ENCODE measurements at regions of chr13 and their contacts with region 1.

Region 1: GRCh38 chr13:101144808-101145419 is 271.4 kb downstream of the NALCN start:
- DNase-seq: peak in 7 of 9 donors; percentile 17 to 48 (median 33)
- ATAC-seq: peak; percentile 63
- H3K4me3 ChIP-seq: no peak overlapping the region
- H3K4me3 Mint-ChIP-seq: no peak overlapping the region
- H3K27ac ChIP-seq: no peak overlapping the region
- H3K27ac Mint-ChIP-seq: no peak overlapping the region
- H3K4me1 ChIP-seq: no peaks in the 10 kb centered on the region
- H3K4me1 Mint-ChIP-seq: no peaks in the 10 kb centered on the region
- H3K27me3 ChIP-seq: no peaks in the 10 kb centered on the region
- H3K27me3 Mint-ChIP-seq: peaks cover 7 to 48% (median 40%) of the 10 kb centered on the region in 5 donors

Region 2: DNA sequence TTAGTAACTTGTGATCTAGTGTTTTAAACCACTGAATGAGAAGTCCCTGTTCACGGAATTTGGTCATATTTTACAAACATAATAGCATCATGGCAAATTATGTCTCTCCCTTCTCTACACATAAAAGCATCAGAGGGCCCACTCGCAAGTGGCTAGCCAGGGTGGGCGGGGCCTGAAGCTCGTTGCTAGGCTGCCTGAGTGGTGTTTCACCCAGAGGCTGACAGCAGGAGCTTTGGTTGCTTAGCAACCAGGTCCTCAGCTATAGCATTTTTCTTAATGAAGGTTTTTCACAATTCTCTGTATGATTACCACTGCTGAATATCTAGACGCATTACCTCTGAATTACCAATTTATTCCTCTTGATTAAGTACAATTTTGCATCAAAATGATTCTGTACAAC is 144.8 kb after region 1 on chr13:
- CTCF ChIA-PET with region 1: no interaction called
- POLR2A ChIA-PET with region 1: no interaction called
- intact Hi-C with region 1: loop called in 1 of 2 experiments (anchors 10 kb)
- DNase-seq: no peak
- ATAC-seq: no peak
- H3K4me3 ChIP-seq: no peak overlapping the region
- H3K4me3 Mint-ChIP-seq: no peak overlapping the region
- H3K27ac ChIP-seq: no peak overlapping the region
- H3K27ac Mint-ChIP-seq: no peak overlapping the region
- H3K4me1 ChIP-seq: no peaks in the 10 kb centered on the region
- H3K4me1 Mint-ChIP-seq: no peaks in the 10 kb centered on the region
- H3K27me3 ChIP-seq: no peaks in the 10 kb centered on the region
- H3K27me3 Mint-ChIP-seq: peaks cover 0 to 24% (median 9%) of the 10 kb centered on the region in 5 donors

Region 3: GRCh38 chr13:101514788-101515187 is 369.9 kb after region 1 on chr13:
- CTCF ChIA-PET with region 1: no interaction called
- POLR2A ChIA-PET with region 1: no interaction called
- intact Hi-C with region 1: loop called (anchors 1 to 10 kb)
- DNase-seq: peak in 6 of 9 donors; percentile 2 to 32 (median 14)
- ATAC-seq: no peak
- H3K4me3 ChIP-seq: no peak overlapping the region
- H3K4me3 Mint-ChIP-seq: no peak overlapping the region
- H3K27ac ChIP-seq: no peak overlapping the region
- H3K27ac Mint-ChIP-seq: no peak overlapping the region
- H3K4me1 ChIP-seq: no peaks in the 10 kb centered on the region
- H3K4me1 Mint-ChIP-seq: peaks cover 0 to 5% (median 0%) of the 10 kb centered on the region in 7 donors
- H3K27me3 ChIP-seq: no peaks in the 10 kb centered on the region
- H3K27me3 Mint-ChIP-seq: peaks cover 0 to 19% (median 3%) of the 10 kb centered on the region in 5 donors

Region 4: GRCh38 chr13:101919541-101920181 is 774.7 kb after region 1 on chr13:
- CTCF ChIA-PET with region 1: no interaction called
- POLR2A ChIA-PET with region 1: no interaction called
- intact Hi-C with region 1: loop called in 1 of 2 experiments (anchors 5 kb)
- DNase-seq: no peak
- ATAC-seq: no peak
- H3K4me3 ChIP-seq: no peak overlapping the region
- H3K4me3 Mint-ChIP-seq: no peak overlapping the region
- H3K27ac ChIP-seq: no peak overlapping the region
- H3K27ac Mint-ChIP-seq: no peak overlapping the region
- H3K4me1 ChIP-seq: no peaks in the 10 kb centered on the region
- H3K4me1 Mint-ChIP-seq: peaks cover 0 to 2% (median 0%) of the 10 kb centered on the region in 7 donors
- H3K27me3 ChIP-seq: peaks cover 0 to 8% of the 10 kb centered on the region in 2 donors
- H3K27me3 Mint-ChIP-seq: peaks cover 44 to 65% (median 57%) of the 10 kb centered on the region in 5 donors

Region 5: GRCh38 chr13:102141625-102142472 is 996.9 kb after region 1 on chr13:
- CTCF ChIA-PET with region 1: no interaction called
- POLR2A ChIA-PET with region 1: no interaction called
- intact Hi-C with region 1: loop called in 1 of 2 experiments (anchors 10 kb)
- DNase-seq: no peak
- ATAC-seq: no peak
- H3K4me3 ChIP-seq: no peak overlapping the region
- H3K4me3 Mint-ChIP-seq: no peak overlapping the region
- H3K27ac ChIP-seq: no peak overlapping the region
- H3K27ac Mint-ChIP-seq: no peak overlapping the region
- H3K4me1 ChIP-seq: no peaks in the 10 kb centered on the region
- H3K4me1 Mint-ChIP-seq: peaks cover 0 to 1% (median 0%) of the 10 kb centered on the region in 7 donors
- H3K27me3 ChIP-seq: no peaks in the 10 kb centered on the region
- H3K27me3 Mint-ChIP-seq: peaks cover 0 to 12% (median 0%) of the 10 kb centered on the region in 5 donors

Region 6: GRCh38 chr13:102555917-102556553 is 1411.1 kb after region 1 on chr13:
- CTCF ChIA-PET with region 1: interaction called, 11 read pairs
- POLR2A ChIA-PET with region 1: no interaction called
- intact Hi-C with region 1: loop called in 1 of 2 experiments (anchors 1 kb)
- DNase-seq: peak in 5 of 9 donors; percentile 19 to 35 (median 28)
- ATAC-seq: no peak
- H3K4me3 ChIP-seq: no peak overlapping the region
- H3K4me3 Mint-ChIP-seq: no peak overlapping the region
- H3K27ac ChIP-seq: no peak overlapping the region
- H3K27ac Mint-ChIP-seq: no peak overlapping the region
- H3K4me1 ChIP-seq: no peaks in the 10 kb centered on the region
- H3K4me1 Mint-ChIP-seq: peaks cover 0 to 5% (median 0%) of the 10 kb centered on the region in 7 donors
- H3K27me3 ChIP-seq: no peaks in the 10 kb centered on the region
- H3K27me3 Mint-ChIP-seq: peaks cover 0 to 11% (median 7%) of the 10 kb centered on the region in 5 donors

Region 7: DNA sequence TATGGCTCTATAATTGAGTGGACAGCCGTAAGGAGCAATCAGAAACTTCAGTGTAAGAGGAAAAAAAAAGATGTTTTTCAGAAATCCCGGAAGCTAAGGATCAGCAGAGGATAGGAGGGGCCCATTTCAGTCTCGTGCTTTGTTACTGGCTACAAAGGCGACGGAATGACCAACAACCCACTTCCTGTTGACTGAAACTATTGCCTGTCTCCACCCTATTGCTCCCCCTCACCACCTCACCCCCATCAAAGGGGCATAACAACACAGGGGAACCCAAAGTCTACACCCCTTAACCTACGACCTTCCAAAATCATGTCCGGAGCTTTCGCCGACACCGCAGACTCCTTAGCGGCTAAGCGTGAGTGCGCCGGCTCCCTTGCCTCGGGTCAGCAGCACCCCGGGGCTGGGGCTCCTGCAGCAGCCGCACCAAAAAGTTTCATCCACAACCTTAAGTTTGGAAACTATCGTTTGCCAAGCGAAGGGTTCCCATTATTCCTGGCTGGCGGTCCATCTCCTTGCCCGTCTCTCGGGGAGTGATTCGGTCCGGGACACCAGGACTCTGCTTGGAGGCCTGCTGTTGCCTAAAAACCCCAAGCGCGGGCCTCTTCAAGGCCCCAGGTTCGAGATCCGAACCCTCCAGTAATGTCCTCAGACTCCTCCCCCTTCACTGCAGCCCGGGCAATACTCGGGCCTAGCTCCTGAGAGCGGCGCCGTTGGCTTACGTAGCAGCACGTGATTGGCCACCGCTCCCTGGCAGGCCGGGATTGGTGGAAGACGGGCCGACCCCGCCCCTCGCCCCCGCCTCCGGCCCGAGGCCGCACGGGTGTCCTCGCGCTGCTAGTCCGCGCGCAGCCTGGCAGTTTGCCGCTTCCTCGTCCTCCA is 1451.5 kb after region 1 on chr13 and contains the start of gene TPP2:
- CTCF ChIA-PET with region 1: no interaction called
- POLR2A ChIA-PET with region 1: no interaction called
- intact Hi-C with region 1: no loop called
- DNase-seq: peak; percentile 95 to 99 (median 97)
- ATAC-seq: peak; percentile 91
- H3K4me3 ChIP-seq: peak within 1 kb of the TSS; percentile 97
- H3K4me3 Mint-ChIP-seq: peak within 1 kb of the TSS; percentile 90 to 99 (median 98)
- H3K27ac ChIP-seq: peak within 1 kb of the TSS; percentile 94
- H3K27ac Mint-ChIP-seq: peak within 1 kb of the TSS; percentile 99 to 100 (median 100)
- H3K4me1 ChIP-seq: peaks cover 34 to 45% of the 10 kb centered on the region in 2 donors
- H3K4me1 Mint-ChIP-seq: peaks cover 37 to 70% (median 65%) of the 10 kb centered on the region in 7 donors
- H3K27me3 ChIP-seq: no peaks in the 10 kb centered on the region
- H3K27me3 Mint-ChIP-seq: no peaks in the 10 kb centered on the region
- total RNA-seq, gene TPP2: 92.1 to 158 (median 119) TPM